Activated CD4-positive, alpha-beta memory T cell treated with anti-CD3 and anti-CD28 coated beads for 36 hours (primary cell): ENCODE measurements at regions of chr19 and their contacts with region 1.

Region 1: GRCh38 chr19:10936661-10937084 is 8.1 kb downstream of the TIMM29 start:
- DNase-seq: peak; percentile 29
- H3K4me3 Mint-ChIP-seq: peak overlapping the region; percentile 12
- H3K27ac Mint-ChIP-seq: no peak overlapping the region
- H3K4me1 Mint-ChIP-seq: peaks cover 2% of the 10 kb centered on the region
- H3K27me3 Mint-ChIP-seq: no peaks in the 10 kb centered on the region

Region 2: GRCh38 chr19:10836478-10837330 is 100.0 kb before region 1 on chr19:
- CTCF ChIA-PET with region 1: no interaction called
- POLR2A ChIA-PET with region 1: no interaction called
- intact Hi-C with region 1: no loop called
- DNase-seq: peak; percentile 91
- H3K4me3 Mint-ChIP-seq: peak overlapping the region; percentile 94
- H3K27ac Mint-ChIP-seq: peak overlapping the region; percentile 99
- H3K4me1 Mint-ChIP-seq: peaks cover 15% of the 10 kb centered on the region
- H3K27me3 Mint-ChIP-seq: no peaks in the 10 kb centered on the region

Region 3: DNA sequence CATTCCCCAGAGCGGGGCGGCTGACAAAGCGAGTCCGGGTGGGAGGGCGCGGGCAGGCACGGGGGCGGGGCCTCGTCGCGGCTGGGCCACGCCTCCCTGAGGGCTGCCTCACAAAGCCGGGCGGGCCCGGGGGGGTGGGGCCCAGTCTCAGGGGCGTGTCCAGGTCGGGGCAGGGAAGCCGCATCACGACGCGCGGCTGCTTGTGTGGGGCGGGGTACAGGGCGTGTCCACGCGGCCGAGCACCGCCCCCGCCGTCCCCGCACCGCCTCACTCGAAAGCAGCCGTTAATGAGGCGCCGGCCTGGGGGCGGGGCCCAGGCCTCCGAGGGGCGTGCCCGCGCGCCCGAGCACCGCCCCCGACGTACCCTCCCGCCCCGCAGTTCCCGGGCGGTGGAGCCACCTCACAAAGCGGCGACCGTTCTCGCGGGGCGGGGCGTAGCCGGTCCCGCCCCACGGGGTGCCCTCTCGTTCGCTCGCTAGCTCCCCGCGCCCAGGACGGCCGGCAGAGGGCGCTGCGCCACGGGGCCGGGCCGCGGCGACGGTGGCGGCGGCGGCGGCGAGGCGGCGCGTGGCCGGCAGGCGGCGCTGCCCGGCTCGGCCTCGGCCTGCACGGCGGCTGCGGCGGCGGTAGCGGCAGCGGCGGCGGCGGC is 65.6 kb before region 1 on chr19 and contains the start of gene CARM1:
- CTCF ChIA-PET with region 1: interaction called, 12 read pairs
- POLR2A ChIA-PET with region 1: no interaction called
- intact Hi-C with region 1: no loop called
- DNase-seq: peak; percentile 99
- H3K4me3 Mint-ChIP-seq: peak within 1 kb of the TSS; percentile 79
- H3K27ac Mint-ChIP-seq: peak within 1 kb of the TSS; percentile 96
- H3K4me1 Mint-ChIP-seq: peaks cover 25% of the 10 kb centered on the region
- H3K27me3 Mint-ChIP-seq: no peaks in the 10 kb centered on the region
- total RNA-seq, gene CARM1: 75.0 to 78.3 TPM

Region 4: DNA sequence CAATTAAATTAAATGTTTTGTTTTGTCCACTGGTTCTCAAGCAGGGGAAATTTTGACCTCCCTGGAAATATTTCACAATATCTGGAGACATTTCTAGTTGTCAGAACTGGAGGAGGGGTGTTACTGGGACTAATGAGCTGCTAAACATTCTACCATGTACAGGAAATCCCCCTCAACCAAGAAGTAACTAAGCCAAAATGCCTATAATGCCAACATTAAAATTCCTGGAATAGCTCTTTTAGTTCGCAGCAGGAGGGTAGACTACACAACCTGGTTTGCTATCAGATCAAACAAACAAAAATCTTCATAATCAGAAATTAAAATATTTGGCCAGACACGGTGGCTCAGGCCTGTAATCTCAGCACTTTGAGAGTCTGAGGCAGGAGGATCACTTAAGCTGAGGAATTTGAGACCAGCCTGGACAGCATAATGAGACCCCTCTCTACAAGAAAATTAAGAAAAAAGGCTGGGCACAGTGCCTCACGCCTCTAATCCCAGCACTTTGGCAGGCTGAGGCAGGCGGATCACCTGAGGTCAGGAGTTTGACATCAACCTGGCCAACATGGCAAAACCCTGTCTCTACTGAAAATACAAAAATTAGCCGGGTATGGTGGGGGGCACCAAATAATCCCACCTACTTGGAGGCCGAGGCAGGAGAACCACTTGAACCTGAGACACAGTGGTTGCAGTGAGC is 10.4 kb after region 1 on chr19:
- CTCF ChIA-PET with region 1: interaction called, 34 read pairs
- POLR2A ChIA-PET with region 1: no interaction called
- intact Hi-C with region 1: no loop called
- DNase-seq: no peak
- H3K4me3 Mint-ChIP-seq: no peak overlapping the region
- H3K27ac Mint-ChIP-seq: no peak overlapping the region
- H3K4me1 Mint-ChIP-seq: no peaks in the 10 kb centered on the region
- H3K27me3 Mint-ChIP-seq: no peaks in the 10 kb centered on the region

Region 5: GRCh38 chr19:10960314-10961072 is 23.8 kb after region 1 on chr19 and contains the start of gene SMARCA4:
- CTCF ChIA-PET with region 1: interaction called, 13 read pairs
- POLR2A ChIA-PET with region 1: interaction called, 5 read pairs
- intact Hi-C with region 1: no loop called
- DNase-seq: peak; percentile 98
- H3K4me3 Mint-ChIP-seq: peak within 1 kb of the TSS; percentile 89
- H3K27ac Mint-ChIP-seq: peak within 1 kb of the TSS; percentile 86
- H3K4me1 Mint-ChIP-seq: peaks cover 44% of the 10 kb centered on the region
- H3K27me3 Mint-ChIP-seq: no peaks in the 10 kb centered on the region
- total RNA-seq, gene SMARCA4: 97.8 to 101 TPM

Region 6: DNA sequence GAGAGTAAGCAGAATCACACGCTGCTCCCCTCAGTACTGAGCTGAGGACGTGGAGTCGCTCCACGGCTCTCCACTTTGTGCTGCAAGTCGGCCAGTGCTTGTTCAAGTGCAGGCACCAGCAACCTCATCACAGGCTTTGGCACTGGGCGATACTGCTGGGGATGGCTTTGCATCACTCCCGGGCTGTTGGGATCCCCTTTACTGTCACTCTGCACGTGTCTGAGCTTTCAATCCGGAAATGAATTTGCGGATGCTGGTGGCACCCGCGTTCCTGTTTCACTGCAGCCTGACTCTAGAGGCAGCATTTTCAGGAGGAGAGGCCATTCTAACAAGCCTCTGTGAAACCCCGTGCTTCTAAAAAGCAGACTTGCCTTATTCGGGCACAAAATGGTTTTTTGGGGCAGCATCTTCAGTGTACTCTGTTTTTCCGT is 43.3 kb after region 1 on chr19:
- CTCF ChIA-PET with region 1: interaction called, 7 read pairs
- POLR2A ChIA-PET with region 1: no interaction called
- intact Hi-C with region 1: loop called (anchors 5 kb)
- DNase-seq: peak; percentile 60
- H3K4me3 Mint-ChIP-seq: no peak overlapping the region
- H3K27ac Mint-ChIP-seq: peak overlapping the region; percentile 33
- H3K4me1 Mint-ChIP-seq: peaks cover 24% of the 10 kb centered on the region
- H3K27me3 Mint-ChIP-seq: no peaks in the 10 kb centered on the region

Region 7: GRCh38 chr19:11137542-11138384 is 201.1 kb after region 1 on chr19:
- CTCF ChIA-PET with region 1: no interaction called
- POLR2A ChIA-PET with region 1: no interaction called
- intact Hi-C with region 1: loop called (anchors 10 kb)
- DNase-seq: peak; percentile 71
- H3K4me3 Mint-ChIP-seq: peak overlapping the region; percentile 71
- H3K27ac Mint-ChIP-seq: peak overlapping the region; percentile 49
- H3K4me1 Mint-ChIP-seq: peaks cover 9% of the 10 kb centered on the region
- H3K27me3 Mint-ChIP-seq: no peaks in the 10 kb centered on the region

Region 8: GRCh38 chr19:11164879-11165406 is 228.3 kb after region 1 on chr19:
- CTCF ChIA-PET with region 1: no interaction called
- POLR2A ChIA-PET with region 1: no interaction called
- intact Hi-C with region 1: no loop called
- DNase-seq: no peak
- H3K4me3 Mint-ChIP-seq: no peak overlapping the region
- H3K27ac Mint-ChIP-seq: no peak overlapping the region
- H3K4me1 Mint-ChIP-seq: no peaks in the 10 kb centered on the region
- H3K27me3 Mint-ChIP-seq: no peaks in the 10 kb centered on the region